Activated CD8-positive, alpha-beta memory T cell treated with anti-CD3 and anti-CD28 coated beads, Interleukin-2, amount 10 ng/mL, durations not matched to agents 7 days and 5 days (primary cell): ENCODE measurements at regions of chr7 and their contacts with region 1.

Region 1: GRCh38 chr7:74401137-74401859 is 52.4 kb upstream of the GTF2IRD1 start:
- DNase-seq: peak; percentile 78
- ATAC-seq: peak; percentile 74
- H3K4me3 Mint-ChIP-seq: no peak overlapping the region
- H3K27ac Mint-ChIP-seq: no peak overlapping the region
- H3K4me1 Mint-ChIP-seq: no peaks in the 10 kb centered on the region
- H3K27me3 Mint-ChIP-seq: no peaks in the 10 kb centered on the region

Region 2: GRCh38 chr7:74068393-74069085 is 332.8 kb before region 1 on chr7:
- CTCF ChIA-PET with region 1: interaction called, 33 read pairs
- DNase-seq: no peak
- ATAC-seq: no peak
- H3K4me3 Mint-ChIP-seq: no peak overlapping the region
- H3K27ac Mint-ChIP-seq: no peak overlapping the region
- H3K4me1 Mint-ChIP-seq: peaks cover 8% of the 10 kb centered on the region
- H3K27me3 Mint-ChIP-seq: no peaks in the 10 kb centered on the region

Region 3: GRCh38 chr7:74199551-74200242 is 201.6 kb before region 1 on chr7:
- CTCF ChIA-PET with region 1: interaction called, 197 read pairs
- DNase-seq: no peak
- ATAC-seq: no peak
- H3K4me3 Mint-ChIP-seq: no peak overlapping the region
- H3K27ac Mint-ChIP-seq: no peak overlapping the region
- H3K4me1 Mint-ChIP-seq: peaks cover 18% of the 10 kb centered on the region
- H3K27me3 Mint-ChIP-seq: peaks cover 3% of the 10 kb centered on the region

Region 4: GRCh38 chr7:74272305-74273038 is 128.8 kb before region 1 on chr7:
- CTCF ChIA-PET with region 1: interaction called, 11 read pairs
- DNase-seq: peak; percentile 84
- ATAC-seq: peak; percentile 68
- H3K4me3 Mint-ChIP-seq: no peak overlapping the region
- H3K27ac Mint-ChIP-seq: peak overlapping the region; percentile 60
- H3K4me1 Mint-ChIP-seq: peaks cover 17% of the 10 kb centered on the region
- H3K27me3 Mint-ChIP-seq: peaks cover 13% of the 10 kb centered on the region

Region 5: DNA sequence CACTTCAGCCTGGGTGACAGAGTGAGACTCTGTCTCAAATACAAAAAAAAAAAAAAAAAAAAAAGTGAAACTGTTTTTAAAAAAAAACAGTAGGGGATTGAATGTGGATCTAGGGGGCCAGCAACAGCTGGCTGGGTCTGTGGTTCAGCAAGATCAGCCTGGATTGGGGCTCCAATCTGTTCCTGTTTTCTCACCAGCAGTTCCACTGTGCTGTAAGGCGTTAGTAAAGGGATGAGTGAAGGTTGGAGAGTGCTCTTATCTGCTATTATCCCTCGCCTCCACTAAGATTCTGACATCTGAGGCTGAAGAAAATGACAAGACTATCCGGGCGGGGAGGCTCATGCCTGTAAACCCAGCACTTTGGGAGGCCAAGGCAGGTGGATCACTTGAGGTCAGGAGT is 10.8 kb after region 1 on chr7:
- CTCF ChIA-PET with region 1: interaction called, 30 read pairs
- DNase-seq: no peak
- ATAC-seq: no peak
- H3K4me3 Mint-ChIP-seq: no peak overlapping the region
- H3K27ac Mint-ChIP-seq: no peak overlapping the region
- H3K4me1 Mint-ChIP-seq: no peaks in the 10 kb centered on the region
- H3K27me3 Mint-ChIP-seq: no peaks in the 10 kb centered on the region